Endothelial cell of umbilical vein (primary cell): ENCODE measurements at regions of chr12 and their contacts with region 1.

Region 1: GRCh38 chr12:45170456-45171042 is 45.3 kb upstream of the ANO6 start:
- DNase-seq: peak; percentile 74
- H3K4me3 ChIP-seq: no peak overlapping the region
- H3K27ac ChIP-seq: no peak overlapping the region
- H3K4me1 ChIP-seq: no peaks in the 10 kb centered on the region
- H3K27me3 ChIP-seq: peaks cover 0 to 5% of the 10 kb centered on the region in 2 experiments
- CTCF ChIP-seq: peak; percentile 86 to 90
- POLR2A ChIP-seq: no peak

Region 2: DNA sequence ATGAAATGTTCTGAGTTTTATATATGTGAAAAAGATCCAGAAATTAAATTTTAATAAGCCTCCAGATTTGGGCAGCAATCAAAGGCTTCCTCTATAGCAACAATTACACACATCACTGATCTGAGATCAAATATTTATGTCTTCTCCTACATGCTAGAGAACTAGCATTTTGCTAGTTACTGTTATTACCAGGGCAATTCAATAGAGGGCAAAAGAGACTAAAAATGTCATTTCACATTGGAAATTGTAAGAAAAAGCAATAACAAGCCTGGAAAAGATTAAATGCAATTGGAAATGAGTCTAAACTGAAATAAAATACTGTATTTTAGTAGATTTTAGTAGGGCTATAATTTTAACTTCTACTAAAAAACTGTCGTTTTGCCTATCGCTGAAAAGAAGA is 12.7 kb after region 1 on chr12:
- CTCF ChIA-PET with region 1: interaction called, 28 read pairs
- POLR2A ChIA-PET with region 1: no interaction called
- dilution Hi-C with region 1: no loop called
- intact Hi-C with region 1: no loop called
- DNase-seq: peak; percentile 51
- H3K4me3 ChIP-seq: no peak overlapping the region
- H3K27ac ChIP-seq: no peak overlapping the region
- H3K4me1 ChIP-seq: no peaks in the 10 kb centered on the region
- H3K27me3 ChIP-seq: no peaks in the 10 kb centered on the region
- CTCF ChIP-seq: peak in 1 of 2 donors; percentile 28
- POLR2A ChIP-seq: no peak

Region 3: GRCh38 chr12:45368841-45369489 is 198.4 kb after region 1 on chr12:
- CTCF ChIA-PET with region 1: interaction called, 12 read pairs
- POLR2A ChIA-PET with region 1: no interaction called
- dilution Hi-C with region 1: no loop called
- intact Hi-C with region 1: no loop called
- DNase-seq: peak; percentile 60
- H3K4me3 ChIP-seq: no peak overlapping the region
- H3K27ac ChIP-seq: no peak overlapping the region
- H3K4me1 ChIP-seq: peaks cover 7% of the 10 kb centered on the region
- H3K27me3 ChIP-seq: no peaks in the 10 kb centered on the region
- CTCF ChIP-seq: no peak
- POLR2A ChIP-seq: no peak